ENCODE measurements at regions of chr2 and their contacts with region 1.

Region 1: DNA sequence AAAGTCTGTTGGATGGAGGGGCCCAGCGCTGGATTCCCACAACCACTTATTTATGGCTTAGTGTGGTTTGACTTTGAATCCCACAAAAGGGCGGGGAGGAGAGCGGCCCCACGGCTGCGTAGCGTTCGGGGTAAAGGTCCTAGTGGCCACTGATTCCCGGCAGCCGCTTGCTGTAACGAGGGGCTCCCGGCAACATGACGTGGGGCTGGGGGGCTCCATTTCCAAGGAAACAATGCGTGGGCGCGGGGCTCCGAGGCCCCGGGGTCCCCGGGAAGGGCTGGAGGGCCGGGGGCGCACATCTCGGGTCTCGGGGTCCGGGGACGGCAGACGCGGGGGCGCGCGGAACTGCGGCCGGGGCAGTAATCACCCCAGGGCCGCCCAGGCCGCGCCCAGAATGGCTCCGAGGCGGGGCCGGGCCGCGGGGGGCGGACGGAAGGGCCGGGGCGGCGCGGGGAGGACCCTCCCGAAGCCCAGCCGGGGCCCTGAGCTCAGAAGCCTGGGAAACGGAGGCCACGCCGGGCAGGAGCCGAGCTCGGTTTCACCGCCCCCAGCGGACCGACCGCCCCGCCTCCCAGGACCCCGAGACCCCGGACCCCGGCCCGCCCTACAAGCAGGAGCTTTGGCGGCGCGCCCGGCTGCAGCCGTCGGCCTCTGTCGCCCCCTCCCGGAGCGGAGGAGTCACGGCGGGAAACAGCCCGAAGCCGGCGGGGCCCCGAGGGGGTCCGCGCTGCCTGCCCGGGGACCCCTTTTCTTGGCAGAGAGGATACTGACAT is 11.9 kb upstream of the MLPH start:
- DNase-seq: peak; percentile 81 to 83
- H3K4me3 ChIP-seq: peak overlapping the region in 2 of 3 donors; percentile 58 to 60
- H3K27ac ChIP-seq: peak overlapping the region; percentile 66 to 93 (median 92)
- H3K4me1 ChIP-seq: peaks cover 10 to 34% of the 10 kb centered on the region in 2 donors
- H3K27me3 ChIP-seq: no peaks in the 10 kb centered on the region
- CTCF ChIP-seq: peak; percentile 68 to 98 (median 90)
- POLR2A ChIP-seq: peak in 1 of 2 donors; percentile 66

Region 2: GRCh38 chr2:237154082-237154638 is 321.0 kb before region 1 on chr2:
- intact Hi-C with region 1: loop called (anchors 10 kb)
- DNase-seq: peak; percentile 44 to 52
- H3K4me3 ChIP-seq: no peak overlapping the region
- H3K27ac ChIP-seq: no peak overlapping the region
- H3K4me1 ChIP-seq: peaks cover 0 to 7% of the 10 kb centered on the region in 2 donors
- H3K27me3 ChIP-seq: no peaks in the 10 kb centered on the region
- CTCF ChIP-seq: peak in 5 of 6 experiments; percentile 12 to 84 (median 66)
- POLR2A ChIP-seq: no peak

Region 3: DNA sequence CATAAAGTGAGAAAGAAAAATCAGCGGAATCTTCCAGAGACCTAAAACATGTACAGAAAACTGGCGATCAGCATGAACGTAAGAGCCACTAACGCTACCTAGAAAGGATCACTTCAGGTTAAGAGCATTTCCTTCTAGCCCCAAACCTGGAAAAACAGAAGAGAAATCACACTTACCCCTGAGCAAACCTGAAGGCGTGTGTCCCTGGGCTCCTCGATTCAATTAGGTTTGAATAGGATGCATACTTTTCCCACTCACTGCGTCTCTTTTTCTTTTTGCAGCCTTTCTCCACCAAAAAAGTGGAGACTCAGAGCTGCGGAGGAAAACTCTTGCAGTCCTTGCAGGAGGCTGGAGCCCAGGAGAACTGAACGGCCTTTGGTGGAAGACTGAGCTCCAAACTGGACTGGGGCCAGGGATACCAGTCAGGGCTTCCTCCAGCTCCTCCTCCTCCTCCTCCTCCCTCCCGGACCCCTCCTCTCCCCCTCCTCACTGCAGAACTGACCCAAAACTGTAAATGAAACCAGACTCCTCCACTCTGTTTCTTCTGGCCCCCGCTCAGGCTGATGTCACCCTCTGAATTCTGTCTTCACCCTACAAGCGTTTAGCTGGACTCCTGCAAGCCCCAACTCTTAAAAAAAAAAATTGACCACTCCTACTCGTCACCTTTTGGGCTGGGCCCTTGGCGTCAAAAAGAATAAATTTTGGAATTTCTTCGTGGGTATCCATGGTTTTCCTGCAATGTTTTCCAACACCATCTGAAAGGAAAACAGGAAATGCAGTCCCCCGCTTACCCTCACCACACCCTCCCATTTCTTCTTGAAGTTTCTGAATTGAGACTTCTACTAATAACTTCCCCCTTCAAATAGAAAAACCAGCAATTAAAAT is 61.1 kb before region 1 on chr2 and contains the start of gene COL6A3:
- intact Hi-C with region 1: loop called (anchors 5 kb)
- DNase-seq: peak in 1 of 2 donors; percentile 28
- H3K4me3 ChIP-seq: peak within 1 kb of the TSS in 2 of 3 donors; percentile 12 to 14
- H3K27ac ChIP-seq: peak within 1 kb of the TSS; percentile 26 to 79 (median 64)
- H3K4me1 ChIP-seq: no peaks in the 10 kb centered on the region
- H3K27me3 ChIP-seq: no peaks in the 10 kb centered on the region
- CTCF ChIP-seq: no peak
- POLR2A ChIP-seq: no peak
- total RNA-seq, gene COL6A3: 82.6 to 168 (median 146) TPM

Region 4: GRCh38 chr2:237566401-237567235 is 91.5 kb after region 1 on chr2 and contains the start of gene PRLH:
- intact Hi-C with region 1: loop called (anchors 5 kb)
- DNase-seq: no peak
- H3K4me3 ChIP-seq: no peak within 1 kb of the TSS
- H3K27ac ChIP-seq: no peak within 1 kb of the TSS
- H3K4me1 ChIP-seq: peaks cover 0 to 1% of the 10 kb centered on the region in 2 donors
- H3K27me3 ChIP-seq: no peaks in the 10 kb centered on the region
- CTCF ChIP-seq: no peak
- POLR2A ChIP-seq: no peak
- total RNA-seq, gene PRLH: not detected

Measured in thyroid gland (tissue), 4 donors.